PC-9 (cell line): ENCODE measurements at regions of chrX and their contacts with region 1.

Region 1: GRCh38 chrX:151729056-151729725 is 5.4 kb upstream of the CNGA2 start:
- DNase-seq: no peak
- H3K4me3 ChIP-seq: no peak overlapping the region
- H3K27ac ChIP-seq: no peak overlapping the region
- H3K4me1 ChIP-seq: no peaks in the 10 kb centered on the region
- H3K27me3 ChIP-seq: peaks cover 41% of the 10 kb centered on the region
- CTCF ChIP-seq: no peak

Region 2: DNA sequence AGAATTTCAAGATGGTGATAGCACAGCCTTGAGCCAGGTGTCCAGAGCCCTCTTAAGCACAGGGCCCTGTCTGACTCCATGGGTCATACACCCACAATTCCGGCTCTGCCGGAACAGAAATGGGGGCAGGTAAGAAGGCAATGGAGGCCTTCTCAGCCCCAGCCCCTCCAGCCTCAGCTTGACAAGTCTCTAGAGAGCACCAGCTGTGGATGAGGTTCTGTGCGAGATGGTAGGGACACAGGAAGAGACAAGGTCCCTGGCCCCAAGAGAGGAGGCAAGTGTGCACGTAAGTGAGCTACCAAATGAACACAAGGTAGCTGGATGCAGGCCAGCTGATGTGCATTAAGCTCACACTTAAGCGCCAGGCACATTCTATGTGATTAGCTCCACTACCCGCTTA is 36.4 kb before region 1 on chrX:
- CTCF ChIA-PET with region 1: no interaction called
- POLR2A ChIA-PET with region 1: no interaction called
- intact Hi-C with region 1: loop called (anchors 1 kb)
- DNase-seq: no peak
- H3K4me3 ChIP-seq: no peak overlapping the region
- H3K27ac ChIP-seq: no peak overlapping the region
- H3K4me1 ChIP-seq: no peaks in the 10 kb centered on the region
- H3K27me3 ChIP-seq: peaks cover 58% of the 10 kb centered on the region
- CTCF ChIP-seq: no peak